Naive thymus-derived CD4-positive, alpha-beta T cell (primary cell): ENCODE measurements at regions of chr2 and their contacts with region 1.

Region 1: DNA sequence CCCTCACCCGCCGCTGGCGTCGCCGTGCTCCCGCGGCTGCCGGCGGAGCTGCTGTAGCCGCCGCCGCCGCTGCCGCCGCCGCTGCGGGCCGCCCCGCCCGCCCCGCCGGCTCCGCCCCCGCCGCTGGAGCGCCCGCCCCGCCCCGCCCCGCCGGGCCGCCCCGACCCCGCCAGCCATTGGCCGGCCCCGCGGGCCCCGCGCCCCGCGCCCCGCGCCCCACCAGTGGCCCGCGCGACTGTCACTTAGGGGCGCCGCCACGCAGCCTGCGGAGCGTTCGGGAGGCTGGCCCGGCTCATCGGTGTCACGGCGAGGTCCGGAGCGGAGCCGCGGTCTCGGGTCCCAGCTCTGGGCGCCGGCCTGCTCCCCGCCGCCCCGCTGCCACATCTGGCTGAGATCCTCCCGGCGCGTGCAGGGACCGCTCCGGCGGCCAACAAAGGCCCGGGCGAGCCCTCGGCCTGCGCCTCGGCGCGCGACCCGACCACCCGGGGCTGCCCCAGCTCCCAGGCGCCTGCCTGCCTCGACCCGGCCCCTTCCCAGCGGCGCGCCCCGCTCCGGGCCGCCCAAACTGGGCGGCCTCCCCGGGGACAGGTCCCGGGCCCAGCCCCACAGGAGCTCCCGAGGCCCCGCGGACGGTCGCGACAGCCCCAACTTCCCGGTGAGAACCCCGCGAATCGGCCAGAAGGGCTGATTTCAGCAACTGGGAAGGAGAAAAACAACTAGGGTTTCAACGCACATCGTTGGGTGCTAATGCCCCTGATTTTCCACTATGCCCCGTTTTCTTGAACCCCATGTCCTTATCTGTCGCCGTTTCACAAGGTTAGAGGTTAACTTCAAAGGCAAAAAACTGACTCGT is at the start of gene MGAT4A:
- DNase-seq: peak; percentile 74 to 85 (median 82)
- ATAC-seq: peak; percentile 88
- H3K4me3 ChIP-seq: peak within 1 kb of the TSS; percentile 79
- H3K4me3 Mint-ChIP-seq: peak within 1 kb of the TSS; percentile 89 to 98 (median 94)
- H3K27ac ChIP-seq: peak within 1 kb of the TSS; percentile 98
- H3K27ac Mint-ChIP-seq: peak within 1 kb of the TSS; percentile 90 to 98 (median 96)
- H3K4me1 ChIP-seq: peaks cover 48% of the 10 kb centered on the region in 2 donors
- H3K4me1 Mint-ChIP-seq: peaks cover 27 to 75% (median 64%) of the 10 kb centered on the region in 7 donors
- H3K27me3 ChIP-seq: no peaks in the 10 kb centered on the region
- H3K27me3 Mint-ChIP-seq: no peaks in the 10 kb centered on the region
- total RNA-seq, gene MGAT4A: 125 to 308 (median 240) TPM

Region 2: GRCh38 chr2:98404556-98405220 is 326.6 kb before region 1 on chr2:
- CTCF ChIA-PET with region 1: no interaction called
- POLR2A ChIA-PET with region 1: no interaction called
- intact Hi-C with region 1: no loop called
- DNase-seq: no peak
- ATAC-seq: no peak
- H3K4me3 ChIP-seq: no peak overlapping the region
- H3K4me3 Mint-ChIP-seq: no peak overlapping the region
- H3K27ac ChIP-seq: no peak overlapping the region
- H3K27ac Mint-ChIP-seq: no peak overlapping the region
- H3K4me1 ChIP-seq: no peaks in the 10 kb centered on the region
- H3K4me1 Mint-ChIP-seq: no peaks in the 10 kb centered on the region
- H3K27me3 ChIP-seq: no peaks in the 10 kb centered on the region
- H3K27me3 Mint-ChIP-seq: peaks cover 4 to 37% (median 20%) of the 10 kb centered on the region in 5 donors

Region 3: DNA sequence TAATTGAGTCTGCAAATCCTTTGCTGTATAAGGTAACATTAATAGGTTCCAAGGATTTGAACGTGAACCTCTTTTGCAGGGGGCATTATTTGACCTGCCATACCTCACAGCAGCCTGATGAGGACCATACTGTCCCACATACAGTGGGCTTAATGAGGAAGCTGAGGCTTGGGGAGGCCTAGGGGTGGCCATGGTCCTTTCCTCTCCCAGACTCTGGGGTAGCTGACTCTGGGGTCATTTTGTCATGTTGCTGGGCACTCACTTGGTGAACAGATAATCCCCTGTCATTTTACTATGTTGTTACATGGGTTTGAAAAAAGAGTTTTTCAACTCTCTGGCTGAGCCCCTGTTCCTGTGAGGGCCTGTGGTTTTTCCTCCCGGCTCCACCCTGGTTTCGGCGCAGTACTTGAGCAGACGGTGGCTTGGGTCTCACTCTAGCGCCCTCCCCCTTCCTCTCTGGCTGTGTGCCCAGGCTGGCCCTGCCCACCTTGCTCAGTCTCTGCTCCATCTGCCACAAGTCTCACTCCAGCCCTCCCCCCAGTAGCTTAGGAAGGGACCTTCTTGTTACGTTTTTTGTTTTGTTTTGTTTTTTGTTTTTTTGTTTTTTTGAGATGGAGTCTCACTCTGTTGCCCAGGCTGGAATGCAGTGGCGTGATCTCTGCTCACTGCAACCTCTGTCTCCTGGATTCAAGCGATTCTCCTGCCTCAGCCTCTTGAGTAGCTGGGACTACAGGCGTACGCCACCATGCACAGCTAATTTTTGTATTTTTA is 265.6 kb before region 1 on chr2:
- CTCF ChIA-PET with region 1: no interaction called
- POLR2A ChIA-PET with region 1: no interaction called
- intact Hi-C with region 1: loop called (anchors 10 kb)
- DNase-seq: peak; percentile 53 to 92 (median 85)
- ATAC-seq: peak; percentile 74
- H3K4me3 ChIP-seq: peak overlapping the region; percentile 61
- H3K4me3 Mint-ChIP-seq: peak overlapping the region; percentile 78 to 98 (median 87)
- H3K27ac ChIP-seq: peak overlapping the region; percentile 85
- H3K27ac Mint-ChIP-seq: peak overlapping the region; percentile 93 to 99 (median 96)
- H3K4me1 ChIP-seq: peaks cover 85 to 87% of the 10 kb centered on the region in 2 donors
- H3K4me1 Mint-ChIP-seq: peaks cover 70 to 95% (median 88%) of the 10 kb centered on the region in 7 donors
- H3K27me3 ChIP-seq: no peaks in the 10 kb centered on the region
- H3K27me3 Mint-ChIP-seq: no peaks in the 10 kb centered on the region

Region 4: DNA sequence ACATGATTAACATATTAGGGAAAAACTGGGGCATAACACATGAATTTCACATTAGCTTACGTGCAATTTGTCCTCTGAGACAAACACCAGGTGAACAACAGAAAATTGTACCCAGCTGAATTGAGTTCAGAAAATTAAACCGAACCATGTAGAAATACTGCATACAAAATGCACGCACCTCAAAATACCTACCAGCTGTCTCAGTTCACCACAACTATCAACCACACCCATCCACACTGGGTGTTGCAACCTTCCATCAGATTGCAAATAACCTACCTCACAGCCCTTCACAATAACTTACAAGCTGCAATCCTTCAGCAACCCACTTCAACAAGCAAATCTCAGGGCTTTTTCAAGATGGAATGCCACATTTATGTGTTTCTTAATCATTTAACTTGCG is 66.9 kb before region 1 on chr2:
- CTCF ChIA-PET with region 1: interaction called, 5 read pairs
- POLR2A ChIA-PET with region 1: interaction called, 353 read pairs
- intact Hi-C with region 1: loop called (anchors 1 kb)
- DNase-seq: peak in 8 of 9 donors; percentile 39 to 88 (median 80)
- ATAC-seq: peak; percentile 83
- H3K4me3 ChIP-seq: peak overlapping the region; percentile 14
- H3K4me3 Mint-ChIP-seq: peak overlapping the region; percentile 56 to 94 (median 80)
- H3K27ac ChIP-seq: peak overlapping the region; percentile 79
- H3K27ac Mint-ChIP-seq: peak overlapping the region; percentile 91 to 99 (median 97)
- H3K4me1 ChIP-seq: peaks cover 51 to 70% of the 10 kb centered on the region in 2 donors
- H3K4me1 Mint-ChIP-seq: peaks cover 35 to 93% (median 75%) of the 10 kb centered on the region in 7 donors
- H3K27me3 ChIP-seq: no peaks in the 10 kb centered on the region
- H3K27me3 Mint-ChIP-seq: no peaks in the 10 kb centered on the region

Region 5: DNA sequence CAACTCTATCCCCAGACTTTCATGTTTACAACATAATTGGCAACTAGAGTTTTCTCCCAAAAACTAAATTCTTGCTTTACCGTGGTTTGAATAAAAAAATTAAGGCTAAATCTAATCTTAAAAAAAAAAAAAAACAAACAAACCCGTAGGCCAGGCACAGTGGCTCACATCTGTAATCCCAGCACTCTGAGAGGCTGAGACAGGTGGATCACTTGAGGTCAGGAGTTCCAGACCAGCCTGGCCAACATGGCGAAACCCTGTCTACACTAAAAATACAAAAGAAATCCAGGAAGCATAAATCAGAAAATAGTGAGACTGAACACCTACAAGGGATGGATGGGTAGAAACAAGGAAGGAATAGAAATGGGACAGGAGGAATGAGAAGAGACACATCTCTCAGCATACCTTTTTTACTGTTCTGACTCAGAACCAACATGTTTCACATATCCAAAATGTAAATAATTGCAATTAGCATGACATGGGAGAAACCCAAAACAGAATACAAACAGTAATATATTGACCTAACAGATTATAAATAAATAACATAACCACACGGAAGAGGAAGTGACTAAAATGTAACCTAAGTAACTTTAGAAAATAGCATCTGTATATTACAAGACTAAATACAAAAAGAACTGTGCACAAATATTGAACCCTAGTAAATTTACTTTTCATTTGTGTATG is 17.8 kb before region 1 on chr2:
- CTCF ChIA-PET with region 1: interaction called, 3 read pairs
- POLR2A ChIA-PET with region 1: interaction called, 99 read pairs
- intact Hi-C with region 1: loop called in 1 of 2 experiments (anchors 1 kb)
- DNase-seq: no peak
- ATAC-seq: no peak
- H3K4me3 ChIP-seq: no peak overlapping the region
- H3K4me3 Mint-ChIP-seq: peak overlapping the region in 9 of 10 donors; percentile 30 to 81 (median 51)
- H3K27ac ChIP-seq: no peak overlapping the region
- H3K27ac Mint-ChIP-seq: peak overlapping the region in 7 of 9 donors; percentile 61 to 90 (median 89)
- H3K4me1 ChIP-seq: peaks cover 66 to 72% of the 10 kb centered on the region in 2 donors
- H3K4me1 Mint-ChIP-seq: peaks cover 64 to 100% (median 91%) of the 10 kb centered on the region in 7 donors
- H3K27me3 ChIP-seq: no peaks in the 10 kb centered on the region
- H3K27me3 Mint-ChIP-seq: no peaks in the 10 kb centered on the region

Region 6: DNA sequence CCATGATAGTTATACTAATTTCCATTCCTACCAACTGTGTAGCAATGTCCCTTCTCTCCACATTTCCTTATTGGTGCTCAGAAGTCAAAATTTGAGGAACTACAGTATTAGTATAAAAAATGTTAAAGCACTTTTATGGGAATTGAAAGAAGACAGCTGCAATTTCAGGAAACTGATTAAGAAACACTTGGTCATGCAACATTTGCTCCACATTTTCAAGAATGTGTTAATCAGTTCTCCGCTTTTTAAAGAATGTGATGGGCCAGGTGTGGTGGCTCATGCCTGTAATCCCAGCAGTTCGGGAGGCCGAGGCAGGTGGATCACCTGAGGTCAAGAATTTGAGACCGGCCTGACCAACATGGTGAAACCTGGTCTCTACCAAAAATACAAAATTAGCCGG is 33.2 kb after region 1 on chr2:
- CTCF ChIA-PET with region 1: interaction called, 17 read pairs
- POLR2A ChIA-PET with region 1: interaction called, 604 read pairs
- intact Hi-C with region 1: loop called in 1 of 2 experiments (anchors 1 kb)
- DNase-seq: no peak
- ATAC-seq: no peak
- H3K4me3 ChIP-seq: no peak overlapping the region
- H3K4me3 Mint-ChIP-seq: no peak overlapping the region
- H3K27ac ChIP-seq: no peak overlapping the region
- H3K27ac Mint-ChIP-seq: peak overlapping the region in 6 of 9 donors; percentile 32 to 99 (median 84)
- H3K4me1 ChIP-seq: peaks cover 45 to 62% of the 10 kb centered on the region in 2 donors
- H3K4me1 Mint-ChIP-seq: peaks cover 53 to 86% (median 77%) of the 10 kb centered on the region in 7 donors
- H3K27me3 ChIP-seq: no peaks in the 10 kb centered on the region
- H3K27me3 Mint-ChIP-seq: no peaks in the 10 kb centered on the region

Region 7: DNA sequence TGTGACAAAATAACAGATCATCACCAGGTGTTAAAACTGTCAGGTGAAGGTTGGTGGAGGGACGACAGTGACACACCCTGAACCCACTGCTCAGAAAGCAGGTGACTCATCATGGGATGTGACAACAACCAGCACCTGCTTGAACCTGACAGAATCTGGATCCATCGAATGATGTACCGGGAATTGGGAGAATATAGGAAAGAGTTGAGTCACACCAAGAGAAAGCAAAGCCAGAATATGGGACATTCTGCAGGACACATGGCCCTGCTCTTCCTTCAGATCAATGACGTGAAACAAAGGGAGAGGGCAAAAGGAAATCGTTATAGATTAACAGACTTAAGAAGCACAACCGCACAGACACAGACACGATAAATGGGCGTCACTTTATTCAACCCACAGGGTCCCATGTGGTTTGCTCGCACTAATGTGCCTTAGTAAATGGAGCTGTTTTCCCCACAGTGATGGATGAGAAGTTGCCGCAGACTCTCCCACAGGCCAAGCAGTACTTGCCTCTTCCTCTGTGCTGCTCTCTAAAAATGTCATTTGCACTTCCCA is 104.6 kb after region 1 on chr2:
- CTCF ChIA-PET with region 1: interaction called, 4 read pairs
- POLR2A ChIA-PET with region 1: interaction called, 5 read pairs
- intact Hi-C with region 1: loop called (anchors 1 kb)
- DNase-seq: peak in 7 of 9 donors; percentile 55 to 78 (median 72)
- ATAC-seq: peak; percentile 87
- H3K4me3 ChIP-seq: peak overlapping the region; percentile 1
- H3K4me3 Mint-ChIP-seq: peak overlapping the region; percentile 32 to 79 (median 52)
- H3K27ac ChIP-seq: peak overlapping the region; percentile 66
- H3K27ac Mint-ChIP-seq: peak overlapping the region; percentile 78 to 98 (median 88)
- H3K4me1 ChIP-seq: peaks cover 16 to 43% of the 10 kb centered on the region in 2 donors
- H3K4me1 Mint-ChIP-seq: peaks cover 24 to 51% (median 28%) of the 10 kb centered on the region in 7 donors
- H3K27me3 ChIP-seq: no peaks in the 10 kb centered on the region
- H3K27me3 Mint-ChIP-seq: peaks cover 0 to 17% (median 0%) of the 10 kb centered on the region in 5 donors

Region 8: GRCh38 chr2:98903767-98904485 is 172.7 kb after region 1 on chr2:
- CTCF ChIA-PET with region 1: no interaction called
- POLR2A ChIA-PET with region 1: no interaction called
- intact Hi-C with region 1: no loop called
- DNase-seq: peak in 1 of 9 donors; percentile 9
- ATAC-seq: no peak
- H3K4me3 ChIP-seq: no peak overlapping the region
- H3K4me3 Mint-ChIP-seq: no peak overlapping the region
- H3K27ac ChIP-seq: no peak overlapping the region
- H3K27ac Mint-ChIP-seq: no peak overlapping the region
- H3K4me1 ChIP-seq: no peaks in the 10 kb centered on the region
- H3K4me1 Mint-ChIP-seq: peaks cover 4 to 6% (median 5%) of the 10 kb centered on the region in 7 donors
- H3K27me3 ChIP-seq: no peaks in the 10 kb centered on the region
- H3K27me3 Mint-ChIP-seq: peaks cover 0 to 20% (median 0%) of the 10 kb centered on the region in 5 donors

Region 9: GRCh38 chr2:98935777-98936352 is 204.6 kb after region 1 on chr2 and contains the start of gene CRACDL:
- CTCF ChIA-PET with region 1: no interaction called
- POLR2A ChIA-PET with region 1: no interaction called
- intact Hi-C with region 1: no loop called
- DNase-seq: peak in 2 of 9 donors; percentile 13 to 44
- ATAC-seq: peak; percentile 54
- H3K4me3 ChIP-seq: peak within 1 kb of the TSS; percentile 30
- H3K4me3 Mint-ChIP-seq: peak within 1 kb of the TSS; percentile 59 to 84 (median 81)
- H3K27ac ChIP-seq: no peak within 1 kb of the TSS
- H3K27ac Mint-ChIP-seq: no peak within 1 kb of the TSS
- H3K4me1 ChIP-seq: peaks cover 0 to 5% of the 10 kb centered on the region in 2 donors
- H3K4me1 Mint-ChIP-seq: peaks cover 0 to 18% (median 14%) of the 10 kb centered on the region in 7 donors
- H3K27me3 ChIP-seq: peaks cover 0 to 4% of the 10 kb centered on the region in 2 donors
- H3K27me3 Mint-ChIP-seq: peaks cover 42 to 78% (median 66%) of the 10 kb centered on the region in 5 donors
- total RNA-seq, gene CRACDL: 0.46 to 1.9 (median 0.79) TPM

Region 10: DNA sequence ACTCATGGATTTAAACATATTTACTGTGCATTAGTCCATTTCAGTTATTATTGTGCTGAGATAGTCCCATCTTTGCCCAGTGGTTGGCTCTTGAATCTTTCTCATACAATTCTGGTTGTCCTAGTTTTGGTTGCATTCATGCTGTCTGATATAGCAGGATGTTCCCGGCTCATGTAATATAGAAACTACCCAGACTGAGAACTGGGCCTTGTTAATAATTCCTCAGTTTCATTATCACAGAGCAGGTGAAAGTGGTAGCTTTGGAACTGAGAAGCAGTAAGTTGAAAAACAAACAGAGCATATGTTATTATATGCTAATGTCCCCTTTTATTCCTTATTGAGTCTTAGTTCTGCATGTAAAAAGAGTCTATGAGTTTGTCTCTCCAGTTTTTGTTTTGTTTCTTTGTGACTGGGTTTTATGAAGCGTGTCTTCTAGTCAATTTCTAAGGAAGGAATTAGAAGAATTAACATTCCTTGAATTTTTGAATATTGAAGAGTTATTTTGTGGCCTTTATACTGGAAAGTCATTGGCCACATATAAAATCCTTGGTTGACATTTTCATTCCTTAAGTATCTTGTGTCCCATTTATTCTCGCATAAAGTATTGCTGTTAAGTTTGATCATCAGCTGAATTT is 649.2 kb after region 1 on chr2:
- CTCF ChIA-PET with region 1: no interaction called
- POLR2A ChIA-PET with region 1: no interaction called
- intact Hi-C with region 1: no loop called
- DNase-seq: no peak
- ATAC-seq: no peak
- H3K4me3 ChIP-seq: no peak overlapping the region
- H3K4me3 Mint-ChIP-seq: no peak overlapping the region
- H3K27ac ChIP-seq: no peak overlapping the region
- H3K27ac Mint-ChIP-seq: peak overlapping the region in 3 of 9 donors; percentile 23 to 45 (median 42)
- H3K4me1 ChIP-seq: no peaks in the 10 kb centered on the region
- H3K4me1 Mint-ChIP-seq: peaks cover 0 to 14% (median 0%) of the 10 kb centered on the region in 7 donors
- H3K27me3 ChIP-seq: no peaks in the 10 kb centered on the region
- H3K27me3 Mint-ChIP-seq: no peaks in the 10 kb centered on the region